HCT116 (cell line): ENCODE measurements at regions of chr5 and their contacts with region 1.

Region 1: DNA sequence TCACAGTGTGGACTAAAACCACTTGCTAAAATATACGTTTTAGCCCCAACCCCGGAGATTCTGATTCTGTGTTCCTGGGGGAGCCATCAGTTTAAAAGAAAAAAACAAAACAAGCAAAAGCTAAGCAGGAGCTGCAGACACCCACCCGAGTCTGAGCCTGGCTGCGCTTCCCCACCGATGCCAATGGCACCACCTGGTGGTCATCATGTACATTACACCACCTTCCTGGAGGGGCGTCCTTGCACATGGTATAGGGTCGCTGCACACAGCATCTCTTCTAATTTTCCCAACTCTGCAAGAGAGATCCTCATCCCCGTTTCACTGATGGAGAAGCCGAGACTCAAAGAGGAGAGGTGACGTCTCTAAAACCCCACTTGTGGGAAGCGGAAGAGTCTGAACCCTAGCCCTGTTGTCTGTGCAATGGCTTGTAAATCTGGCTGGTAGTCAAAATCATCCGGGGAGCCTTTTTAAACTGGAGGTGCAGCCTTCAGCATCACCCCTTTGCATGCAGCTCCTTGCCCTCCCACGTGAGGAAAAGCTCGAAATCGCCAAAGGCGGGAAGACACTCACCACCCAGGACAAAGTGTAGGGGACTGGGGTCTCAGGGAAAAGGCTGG is 23.1 kb upstream of the CNOT6 start:
- DNase-seq: peak; percentile 32
- ATAC-seq: peak; percentile 85
- H3K4me3 ChIP-seq: no peak overlapping the region
- H3K27ac ChIP-seq: no peak overlapping the region
- H3K4me1 ChIP-seq: peaks cover 7 to 14% of the 10 kb centered on the region in 2 experiments; a peak in 3 of 4 replicates
- H3K27me3 ChIP-seq: no peaks in the 10 kb centered on the region
- CTCF ChIP-seq: peak; percentile 83 to 96 (median 95)
- POLR2A ChIP-seq: no peak
- RAD21 ChIP-seq: peak; percentile 93

Region 2: GRCh38 chr5:180209137-180209581 is 261.9 kb before region 1 on chr5 and contains the start of gene RASGEF1C:
- CTCF ChIA-PET with region 1: interaction called, 4 read pairs
- POLR2A ChIA-PET with region 1: no interaction called
- RAD21 ChIA-PET with region 1: no interaction called
- intact Hi-C with region 1: loop called (anchors 10 kb)
- DNase-seq: peak; percentile 19
- ATAC-seq: peak; percentile 93
- H3K4me3 ChIP-seq: peak within 1 kb of the TSS; percentile 47 to 60
- H3K27ac ChIP-seq: peak within 1 kb of the TSS; percentile 34; the same call in 1 of the 2 replicates
- H3K4me1 ChIP-seq: peaks cover 5 to 14% of the 10 kb centered on the region in 2 experiments; a peak in 3 of 4 replicates
- H3K27me3 ChIP-seq: no peaks in the 10 kb centered on the region
- CTCF ChIP-seq: peak in 2 of 3 experiments; percentile 36 to 37; a peak in 3 of 6 replicates
- POLR2A ChIP-seq: no peak
- RAD21 ChIP-seq: 0 out of 2 replicates have a peak, but pooled peaks have one; percentile 16
- total RNA-seq, gene RASGEF1C: 1.2 TPM

Region 3: GRCh38 chr5:180323160-180323559 is 147.9 kb before region 1 on chr5:
- CTCF ChIA-PET with region 1: no interaction called
- POLR2A ChIA-PET with region 1: no interaction called
- RAD21 ChIA-PET with region 1: no interaction called
- intact Hi-C with region 1: no loop called
- DNase-seq: no peak
- ATAC-seq: no peak
- H3K4me3 ChIP-seq: no peak overlapping the region
- H3K27ac ChIP-seq: no peak overlapping the region
- H3K4me1 ChIP-seq: no peaks in the 10 kb centered on the region
- H3K27me3 ChIP-seq: no peaks in the 10 kb centered on the region
- CTCF ChIP-seq: no peak
- POLR2A ChIP-seq: no peak
- RAD21 ChIP-seq: no peak